Panc1 (cell line): ENCODE measurements at regions of chr6 and their contacts with region 1.

Region 1: DNA sequence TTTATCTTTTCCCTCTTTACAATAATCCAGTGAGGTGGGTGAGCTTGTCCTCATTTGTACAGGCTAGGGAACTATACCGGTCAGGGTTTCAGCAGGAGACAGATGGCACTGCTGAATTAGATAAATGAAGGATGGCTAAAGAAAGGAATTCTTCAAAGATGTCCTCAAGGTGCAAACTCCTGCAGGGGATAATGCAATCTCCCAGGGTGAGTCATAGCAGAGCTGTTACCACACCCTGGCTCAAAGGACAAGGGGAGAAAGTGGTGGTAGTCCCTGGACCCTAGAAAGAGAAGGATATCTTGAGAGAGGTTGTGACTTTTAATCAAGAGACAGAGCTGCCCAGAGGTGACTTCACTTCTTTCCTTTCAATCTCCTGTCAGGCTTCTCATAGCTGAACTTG is 66.7 kb downstream of the RFPL4B start:
- DNase-seq: no peak
- ATAC-seq: no peak
- H3K4me3 ChIP-seq: no peak overlapping the region
- H3K27ac ChIP-seq: no peak overlapping the region
- H3K4me1 ChIP-seq: no peaks in the 10 kb centered on the region
- H3K27me3 ChIP-seq: no peaks in the 10 kb centered on the region
- CTCF ChIP-seq: 0 out of 2 replicates have a peak, but pooled peaks have one; percentile 11

Region 2: GRCh38 chr6:110826236-110827129 is 1587.3 kb before region 1 on chr6:
- CTCF ChIA-PET with region 1: no interaction called
- POLR2A ChIA-PET with region 1: interaction called, 11 read pairs
- in situ Hi-C with region 1: no loop called
- intact Hi-C with region 1: no loop called
- DNase-seq: no peak
- ATAC-seq: no peak
- H3K4me3 ChIP-seq: no peak overlapping the region
- H3K27ac ChIP-seq: no peak overlapping the region
- H3K4me1 ChIP-seq: no peaks in the 10 kb centered on the region
- H3K27me3 ChIP-seq: no peaks in the 10 kb centered on the region; the same call in 1 of the 2 replicates
- CTCF ChIP-seq: no peak